ENCODE measurements at regions of chr3 and their contacts with region 1.

Region 1: GRCh38 chr3:160210799-160211221 is 14.4 kb upstream of the C3orf80 start:
- DNase-seq: peak; percentile 67
- H3K4me3 ChIP-seq: no peak overlapping the region
- CTCF ChIP-seq: peak; percentile 26

Region 2: DNA sequence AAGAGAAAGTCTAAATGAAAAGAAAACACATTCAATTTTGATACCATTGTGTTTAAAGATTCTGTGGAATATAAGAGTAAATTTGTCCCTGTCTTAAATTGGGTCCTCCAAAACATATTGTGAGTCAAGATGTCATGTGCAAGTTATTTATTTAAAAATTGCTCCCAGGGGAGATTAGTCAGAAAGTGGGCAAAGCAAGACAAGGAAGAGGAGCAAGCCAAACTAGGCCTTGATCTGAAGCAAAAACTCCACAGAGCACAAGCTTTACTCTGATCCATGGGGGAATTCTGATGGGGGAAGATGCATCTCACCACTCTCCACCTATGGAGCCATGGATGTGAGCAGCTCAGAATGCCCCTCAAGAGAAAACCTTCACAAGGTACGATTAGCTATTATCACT is 564.9 kb before region 1 on chr3:
- in situ Hi-C with region 1: no loop called
- DNase-seq: no peak
- H3K4me3 ChIP-seq: no peak overlapping the region
- CTCF ChIP-seq: no peak

Region 3: DNA sequence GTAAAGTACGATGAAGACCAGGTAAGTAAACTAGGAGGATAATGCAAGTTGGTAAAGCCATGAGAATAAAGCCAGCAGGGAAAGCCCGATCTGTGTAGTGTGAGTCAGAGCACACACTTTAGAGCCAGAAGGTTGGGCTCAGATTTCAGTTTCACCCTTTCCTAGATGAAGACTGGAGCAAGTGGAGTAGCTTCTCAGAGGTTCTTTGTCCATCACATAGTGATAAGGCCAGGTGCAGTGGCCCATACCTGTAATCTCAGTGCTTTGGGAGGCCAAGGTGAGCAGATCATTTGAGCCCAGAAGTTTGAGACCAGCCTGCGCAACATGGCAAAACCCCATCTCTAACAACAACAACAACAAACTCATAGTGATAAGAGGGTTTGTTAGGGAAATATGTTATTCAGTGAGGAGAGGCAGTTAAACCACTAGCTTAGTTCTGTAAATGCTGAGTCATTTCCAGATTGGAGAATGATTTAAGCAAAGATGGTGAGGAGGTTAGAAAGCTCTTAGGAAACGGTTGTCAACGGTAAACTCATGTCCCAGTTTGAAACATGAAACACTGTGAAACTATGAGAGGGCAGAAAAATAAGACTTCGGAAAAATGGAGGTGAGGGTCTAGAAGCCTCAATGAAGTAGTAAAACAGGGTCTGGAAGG is 183.1 kb before region 1 on chr3:
- in situ Hi-C with region 1: loop called (anchors 25 kb)
- DNase-seq: peak; percentile 72
- H3K4me3 ChIP-seq: no peak overlapping the region
- CTCF ChIP-seq: no peak

Measured in astrocyte of the spinal cord (primary cell).